ENCODE measurements at regions of chr13 and their contacts with region 1.

Region 1: DNA sequence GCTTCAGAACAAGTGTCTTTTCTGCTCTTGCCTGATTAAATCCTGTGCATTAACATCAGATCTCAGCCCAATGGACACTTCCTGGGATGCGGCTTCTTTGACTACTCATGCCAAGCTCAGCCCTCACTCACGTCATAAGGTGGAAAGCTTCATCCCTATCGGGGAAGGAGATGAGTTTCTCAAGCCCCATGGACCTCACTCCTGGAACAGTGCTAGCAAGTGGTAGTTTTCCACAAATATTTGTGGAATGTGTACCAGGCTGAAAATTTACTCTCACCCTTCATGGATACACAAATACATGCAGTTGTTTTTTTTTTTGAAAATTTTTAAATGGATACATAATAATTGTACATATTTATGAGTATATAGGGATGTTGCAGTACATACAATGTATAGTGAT is 34.6 kb upstream of the FARP1 start:
- DNase-seq: no peak
- ATAC-seq: no peak
- H3K4me3 ChIP-seq: no peak overlapping the region
- H3K27ac ChIP-seq: no peak overlapping the region
- H3K4me1 ChIP-seq: no peaks in the 10 kb centered on the region
- CTCF ChIP-seq: no peak
- EP300 ChIP-seq: no peak
- POLR2A ChIP-seq: no peak
- RAD21 ChIP-seq: no peak

Region 2: DNA sequence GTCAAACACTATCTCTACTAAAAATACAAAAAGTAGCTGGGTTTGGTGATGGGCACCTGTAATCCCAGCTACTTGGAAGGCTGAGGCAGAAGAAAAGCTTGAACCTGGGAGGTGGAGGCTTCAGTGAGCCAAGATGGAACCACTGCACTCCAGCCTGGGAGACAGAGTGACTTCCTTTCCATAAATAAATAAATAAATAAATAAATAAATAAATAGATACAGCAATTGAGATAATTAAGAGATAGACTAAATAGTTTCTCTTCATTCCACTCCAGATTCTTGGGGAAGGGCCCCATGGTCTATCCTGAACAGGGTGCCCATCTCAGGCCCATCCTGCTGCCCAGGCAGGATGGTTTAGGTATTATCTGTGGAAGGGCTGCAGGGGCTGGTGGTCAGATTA is 10.5 kb after region 1 on chr13:
- CTCF ChIA-PET with region 1: interaction called, 10 read pairs
- POLR2A ChIA-PET with region 1: no interaction called
- DNase-seq: no peak
- ATAC-seq: no peak
- H3K4me3 ChIP-seq: no peak overlapping the region
- H3K27ac ChIP-seq: no peak overlapping the region
- H3K4me1 ChIP-seq: no peaks in the 10 kb centered on the region
- CTCF ChIP-seq: no peak
- EP300 ChIP-seq: no peak
- POLR2A ChIP-seq: no peak
- RAD21 ChIP-seq: no peak